Activated CD8-positive, alpha-beta T cell treated with anti-CD3 and anti-CD28 coated beads, Interleukin-2, amount 10 ng/mL, durations not matched to agents 7 days and 5 days (primary cell): ENCODE measurements at regions of chr21 and their contacts with region 1.

Region 1: GRCh38 chr21:38805328-38806152 is at the start of gene ETS2:
- DNase-seq: peak; percentile 83
- ATAC-seq: peak; percentile 88
- H3K4me3 Mint-ChIP-seq: peak within 1 kb of the TSS; percentile 76
- H3K27ac Mint-ChIP-seq: peak within 1 kb of the TSS; percentile 88
- H3K4me1 Mint-ChIP-seq: peaks cover 33% of the 10 kb centered on the region
- H3K27me3 Mint-ChIP-seq: no peaks in the 10 kb centered on the region
- total RNA-seq, gene ETS2: 17.0 to 20.1 TPM

Region 2: GRCh38 chr21:38733973-38734546 is 71.5 kb before region 1 on chr21:
- CTCF ChIA-PET with region 1: interaction called, 17 read pairs
- POLR2A ChIA-PET with region 1: no interaction called
- DNase-seq: peak; percentile 72
- ATAC-seq: peak; percentile 68
- H3K4me3 Mint-ChIP-seq: peak overlapping the region; percentile 61
- H3K27ac Mint-ChIP-seq: no peak overlapping the region
- H3K4me1 Mint-ChIP-seq: peaks cover 11% of the 10 kb centered on the region
- H3K27me3 Mint-ChIP-seq: peaks cover 23% of the 10 kb centered on the region

Region 3: DNA sequence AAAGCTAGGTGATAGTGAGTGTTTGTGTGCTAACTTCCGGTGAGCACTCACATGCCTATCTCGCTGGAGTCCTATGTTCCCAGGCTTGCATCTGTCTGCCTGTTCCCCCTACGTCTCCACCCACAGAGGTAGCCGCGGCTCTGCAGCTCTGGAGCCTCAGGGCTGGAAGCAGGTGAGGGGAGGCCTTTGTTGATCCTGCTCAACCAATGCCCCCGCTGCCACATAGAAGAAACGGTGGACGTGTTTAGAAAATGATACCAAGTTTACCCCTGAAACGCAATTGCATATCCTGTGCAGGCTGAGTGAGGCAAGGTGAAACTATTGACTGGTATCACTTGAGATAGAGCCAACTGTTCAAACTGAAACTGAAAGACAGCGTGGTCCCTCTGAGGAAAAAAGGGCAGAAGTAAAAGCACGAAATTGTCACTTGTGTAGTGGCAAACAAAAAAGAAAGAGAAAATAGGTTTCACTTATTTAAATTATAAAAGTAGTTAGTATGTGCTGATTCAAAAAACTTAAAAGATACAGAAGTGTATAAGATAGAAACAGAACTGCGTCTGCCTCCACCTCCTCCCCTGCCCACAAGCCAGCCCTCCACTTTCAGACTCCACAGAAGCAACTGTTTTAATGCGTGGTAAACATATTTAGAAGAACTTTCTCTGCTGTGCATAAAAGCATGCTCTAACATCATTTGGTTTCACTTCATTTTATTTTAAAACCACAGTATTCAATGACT is 38.4 kb before region 1 on chr21:
- CTCF ChIA-PET with region 1: interaction called, 11 read pairs
- POLR2A ChIA-PET with region 1: interaction called, 10 read pairs
- DNase-seq: peak; percentile 82
- ATAC-seq: peak; percentile 96
- H3K4me3 Mint-ChIP-seq: peak overlapping the region; percentile 83
- H3K27ac Mint-ChIP-seq: peak overlapping the region; percentile 100
- H3K4me1 Mint-ChIP-seq: peaks cover 36% of the 10 kb centered on the region
- H3K27me3 Mint-ChIP-seq: no peaks in the 10 kb centered on the region